BJ (cell line): ENCODE measurements at regions of chr9 and their contacts with region 1.

Region 1: DNA sequence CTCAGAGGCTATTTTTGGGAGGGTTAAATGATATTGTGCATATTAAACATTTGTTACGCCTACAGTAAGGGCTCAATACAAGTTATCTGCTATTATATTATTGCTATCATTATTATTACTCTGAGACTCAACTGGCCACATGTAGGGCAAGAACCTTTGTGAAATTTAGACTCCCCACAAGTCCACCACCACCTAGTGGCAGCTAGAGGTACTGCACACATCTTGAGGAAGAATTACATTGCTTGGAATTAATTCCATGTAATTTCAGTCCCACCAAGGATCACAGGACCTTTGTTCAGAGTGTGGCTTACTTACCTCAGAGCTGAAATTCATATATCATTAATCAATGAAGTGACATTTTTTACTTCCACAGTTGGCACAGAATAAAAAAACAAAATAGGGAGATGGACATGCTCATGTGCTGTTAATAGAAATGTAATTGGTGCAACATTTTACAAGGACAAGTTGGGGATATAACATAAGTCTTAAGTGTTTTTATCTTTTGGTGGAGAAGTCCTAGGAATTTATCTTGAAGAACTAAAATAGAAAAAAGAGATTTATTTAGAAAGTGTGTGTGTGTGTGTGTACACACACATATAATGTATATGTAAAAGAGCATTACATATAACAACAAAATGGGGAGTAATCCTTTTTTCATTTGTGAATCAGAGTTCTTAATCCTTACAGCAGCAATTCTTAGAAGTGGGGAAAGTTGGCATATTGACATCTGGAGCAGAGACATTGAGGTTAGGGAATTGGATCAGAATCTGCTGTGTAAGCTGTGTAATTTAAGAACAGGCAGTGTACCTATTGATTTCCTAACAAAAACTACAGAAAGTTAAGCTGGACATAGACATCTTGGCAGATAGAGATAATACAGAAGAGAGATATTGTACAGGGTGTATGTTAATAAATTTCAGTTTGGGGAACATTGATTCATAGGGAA is 11.2 kb downstream of the MSANTD3 start:
- DNase-seq: no peak
- H3K4me3 ChIP-seq: no peak overlapping the region
- H3K27me3 ChIP-seq: no peaks in the 10 kb centered on the region
- CTCF ChIP-seq: peak; percentile 95

Region 2: GRCh38 chr9:100426530-100427428 is 11.4 kb before region 1 on chr9 and contains the start of gene MSANTD3:
- CTCF ChIA-PET with region 1: interaction called, 14 read pairs
- POLR2A ChIA-PET with region 1: interaction called, 3 read pairs
- DNase-seq: no peak
- H3K4me3 ChIP-seq: peak within 1 kb of the TSS; percentile 67
- H3K27me3 ChIP-seq: no peaks in the 10 kb centered on the region
- CTCF ChIP-seq: no peak
- polyA plus RNA-seq, gene MSANTD3: 34.5 and 38.3 TPM in 2 replicates

Region 3: GRCh38 chr9:100477241-100477640 is 39.1 kb after region 1 on chr9:
- CTCF ChIA-PET with region 1: interaction called, 3 read pairs
- POLR2A ChIA-PET with region 1: interaction called, 10 read pairs
- DNase-seq: no peak
- H3K4me3 ChIP-seq: no peak overlapping the region
- H3K27me3 ChIP-seq: no peaks in the 10 kb centered on the region
- CTCF ChIP-seq: no peak

Region 4: DNA sequence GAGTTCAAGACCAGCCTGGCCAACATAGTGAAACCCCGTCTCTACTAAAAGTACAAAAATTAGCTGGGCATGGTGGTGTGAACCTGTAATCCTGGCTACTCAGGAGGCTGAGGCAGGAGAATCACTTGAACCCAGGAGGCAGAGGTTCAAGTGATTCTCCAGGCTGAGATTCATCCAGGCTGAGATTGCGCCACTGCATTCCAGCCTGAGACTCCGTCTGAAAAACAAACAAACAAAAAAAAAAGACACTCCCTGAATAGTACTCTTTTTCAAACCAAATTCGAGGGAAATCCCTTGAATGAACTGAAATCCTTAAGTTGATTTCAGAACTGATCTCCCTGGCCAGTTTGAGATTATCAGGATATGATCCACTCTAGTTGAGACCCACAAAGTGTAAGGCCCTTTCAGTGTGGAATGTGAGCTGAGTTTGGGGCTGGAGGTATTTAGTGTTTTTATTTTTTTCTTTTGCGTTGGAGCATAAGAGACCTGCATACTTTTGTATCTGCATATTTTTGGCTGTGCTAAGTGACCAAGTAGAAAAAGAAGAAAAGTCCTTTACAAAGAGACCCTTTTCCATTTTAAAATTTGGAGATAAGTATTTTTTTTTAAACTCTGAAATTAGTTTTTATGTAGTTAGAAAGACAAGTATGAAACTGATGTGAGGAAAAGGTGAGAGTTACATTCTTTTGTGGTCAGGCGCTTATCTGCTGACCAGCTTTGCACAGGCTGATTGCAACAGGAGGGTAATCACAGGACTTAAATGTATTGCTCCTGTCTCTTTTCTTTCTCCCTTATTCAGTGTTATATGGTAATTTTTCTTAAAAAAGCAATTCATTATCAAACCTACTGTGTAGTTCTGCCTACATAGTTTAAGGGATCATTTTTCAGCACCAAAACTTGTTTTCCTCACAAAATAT is 77.7 kb after region 1 on chr9:
- CTCF ChIA-PET with region 1: no interaction called
- POLR2A ChIA-PET with region 1: no interaction called
- DNase-seq: no peak
- H3K4me3 ChIP-seq: no peak overlapping the region
- H3K27me3 ChIP-seq: no peaks in the 10 kb centered on the region
- CTCF ChIP-seq: no peak